ENCODE measurements at regions of chr3 and their contacts with region 1.

Region 1: DNA sequence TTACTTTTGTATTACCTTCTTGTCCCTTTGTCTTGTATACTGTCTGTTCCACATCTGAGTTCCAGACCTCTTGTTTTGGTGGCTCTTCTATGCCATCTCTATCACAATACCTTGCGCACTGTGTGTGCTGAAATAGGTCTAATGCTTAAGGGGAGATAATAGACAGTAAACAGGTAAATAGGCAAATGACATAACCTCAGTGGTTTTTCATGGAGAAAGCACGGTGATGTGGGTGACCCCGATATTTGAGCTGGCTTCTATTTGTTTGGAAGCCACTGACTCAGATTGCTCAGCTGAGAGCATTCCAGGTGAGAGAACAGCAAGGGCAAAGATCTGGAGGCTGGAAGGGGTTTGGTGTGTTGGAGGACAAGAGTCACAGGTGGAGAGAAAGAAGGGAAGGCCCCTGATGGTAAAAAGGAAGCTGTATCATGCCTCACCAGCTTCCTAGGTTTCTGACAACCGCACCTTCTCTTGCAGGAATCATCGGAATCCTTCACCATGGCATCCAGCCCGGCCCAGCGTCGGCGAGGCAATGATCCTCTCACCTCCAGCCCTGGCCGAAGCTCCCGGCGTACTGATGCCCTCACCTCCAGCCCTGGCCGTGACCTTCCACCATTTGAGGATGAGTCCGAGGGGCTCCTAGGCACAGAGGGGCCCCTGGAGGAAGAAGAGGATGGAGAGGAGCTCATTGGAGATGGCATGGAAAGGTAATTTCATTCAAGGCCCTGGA is 795 bp downstream of the MCM2 start:
- DNase-seq: no peak
- H3K4me3 Mint-ChIP-seq: peak overlapping the region; percentile 93
- H3K27ac Mint-ChIP-seq: peak overlapping the region; percentile 91
- H3K4me1 Mint-ChIP-seq: peaks cover 40% of the 10 kb centered on the region
- H3K27me3 Mint-ChIP-seq: no peaks in the 10 kb centered on the region

Region 2: GRCh38 chr3:126083913-126084767 is 1514.9 kb before region 1 on chr3 and contains the start of gene SLC41A3:
- intact Hi-C with region 1: loop called (anchors 5 kb)
- DNase-seq: peak; percentile 86
- H3K4me3 Mint-ChIP-seq: peak within 1 kb of the TSS; percentile 92
- H3K27ac Mint-ChIP-seq: peak within 1 kb of the TSS; percentile 82
- H3K4me1 Mint-ChIP-seq: peaks cover 14% of the 10 kb centered on the region
- H3K27me3 Mint-ChIP-seq: no peaks in the 10 kb centered on the region
- total RNA-seq, gene SLC41A3: 13.1 and 14.7 TPM in 2 replicates

Region 3: DNA sequence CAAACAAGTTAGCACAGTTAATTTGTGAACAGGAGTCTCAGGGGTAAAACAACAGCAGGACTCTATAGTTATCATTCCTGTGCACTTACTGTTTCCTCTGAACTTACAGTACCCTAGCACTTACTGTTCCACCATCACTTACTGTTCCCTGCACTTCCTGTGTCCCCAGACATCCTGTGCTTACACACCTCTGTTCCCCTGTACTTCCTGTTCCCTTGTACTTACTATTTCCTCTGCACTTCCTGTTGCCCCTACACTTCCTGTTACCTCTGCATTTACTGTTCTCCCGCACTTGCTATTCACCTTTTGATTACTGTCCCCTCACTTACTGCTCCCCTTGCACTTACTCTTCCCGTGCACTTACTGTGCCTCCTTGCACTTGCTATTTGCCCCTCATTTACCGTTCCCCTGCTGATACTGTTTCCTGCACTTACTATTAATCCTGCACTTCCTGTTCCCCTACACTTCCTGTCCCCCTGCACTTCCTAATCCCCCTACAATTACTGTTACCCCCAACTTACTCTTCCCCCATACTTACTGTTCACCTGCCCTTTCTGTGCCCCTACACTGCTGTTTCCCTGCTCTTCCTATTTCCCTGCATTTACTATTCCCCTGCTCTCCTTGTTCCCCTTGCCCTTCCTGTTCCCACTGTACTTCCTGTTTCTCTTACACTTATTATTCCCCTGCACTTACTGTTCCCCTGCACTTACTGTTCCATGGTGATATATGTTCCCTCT is 38.8 kb before region 1 on chr3:
- intact Hi-C with region 1: no loop called
- DNase-seq: no peak
- H3K4me3 Mint-ChIP-seq: no peak overlapping the region
- H3K27ac Mint-ChIP-seq: no peak overlapping the region
- H3K4me1 Mint-ChIP-seq: peaks cover 3% of the 10 kb centered on the region
- H3K27me3 Mint-ChIP-seq: peaks cover 7% of the 10 kb centered on the region

Region 4: GRCh38 chr3:127574880-127575878 is 23.8 kb before region 1 on chr3:
- intact Hi-C with region 1: loop called (anchors 1 kb)
- DNase-seq: peak; percentile 83
- H3K4me3 Mint-ChIP-seq: no peak overlapping the region
- H3K27ac Mint-ChIP-seq: no peak overlapping the region
- H3K4me1 Mint-ChIP-seq: peaks cover 5% of the 10 kb centered on the region
- H3K27me3 Mint-ChIP-seq: no peaks in the 10 kb centered on the region

Region 5: GRCh38 chr3:127672516-127673190 is 73.6 kb after region 1 on chr3 and contains the start of gene ABTB1:
- intact Hi-C with region 1: loop called (anchors 2 kb)
- DNase-seq: peak; percentile 84
- H3K4me3 Mint-ChIP-seq: peak within 1 kb of the TSS; percentile 93
- H3K27ac Mint-ChIP-seq: peak within 1 kb of the TSS; percentile 97
- H3K4me1 Mint-ChIP-seq: peaks cover 13% of the 10 kb centered on the region
- H3K27me3 Mint-ChIP-seq: no peaks in the 10 kb centered on the region
- total RNA-seq, gene ABTB1: 11.7 and 12.1 TPM in 2 replicates

Region 6: GRCh38 chr3:128051837-128052594 is 453.0 kb after region 1 on chr3 and contains the start of gene SEC61A1:
- intact Hi-C with region 1: loop called (anchors 1 kb)
- DNase-seq: peak; percentile 95
- H3K4me3 Mint-ChIP-seq: peak within 1 kb of the TSS; percentile 99
- H3K27ac Mint-ChIP-seq: peak within 1 kb of the TSS; percentile 99
- H3K4me1 Mint-ChIP-seq: peaks cover 38% of the 10 kb centered on the region
- H3K27me3 Mint-ChIP-seq: peaks cover 11% of the 10 kb centered on the region
- total RNA-seq, gene SEC61A1: 210 and 217 TPM in 2 replicates